Endothelial cell of umbilical vein (primary cell): ENCODE measurements at regions of chr11 and their contacts with region 1.

Region 1: DNA sequence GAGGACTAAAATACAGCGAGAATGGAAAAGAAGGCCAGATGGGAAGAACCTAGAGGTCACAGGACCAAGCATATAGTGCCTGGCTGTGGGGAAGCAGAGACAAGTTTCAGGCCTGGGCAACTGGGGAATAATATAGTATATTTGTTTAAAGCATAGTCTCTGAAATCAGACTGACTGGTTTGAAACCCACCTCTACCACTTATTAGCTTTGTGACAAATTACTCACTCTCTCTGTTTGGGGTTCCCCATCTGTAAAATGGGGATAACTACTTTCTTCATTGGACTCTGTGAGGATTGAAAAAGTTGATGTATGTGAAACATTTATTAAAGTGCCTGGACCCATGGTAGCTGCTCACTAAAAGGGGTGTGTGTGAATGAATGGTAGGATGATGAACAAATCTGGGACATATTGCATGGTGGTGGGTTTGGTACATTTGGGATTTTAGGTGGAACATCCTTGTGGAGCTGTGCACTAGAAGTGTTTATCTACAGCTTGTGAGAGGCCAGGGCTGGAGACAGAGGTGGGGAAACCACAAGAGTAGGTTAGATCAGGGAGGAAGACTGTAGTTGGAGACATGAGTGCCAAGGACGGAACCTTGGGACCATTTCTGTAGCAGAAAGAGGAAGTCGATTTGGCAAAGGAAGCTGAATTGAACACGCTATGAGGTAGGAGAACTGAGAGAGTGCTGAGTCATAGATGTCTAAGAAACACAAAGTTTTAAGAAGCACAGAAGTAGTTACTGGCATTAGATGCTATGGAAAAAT is 52.6 kb downstream of the SWAP70 start:
- DNase-seq: peak; percentile 97
- H3K4me3 ChIP-seq: no peak overlapping the region
- H3K27ac ChIP-seq: peak overlapping the region; percentile 94
- H3K4me1 ChIP-seq: peaks cover 64% of the 10 kb centered on the region
- H3K27me3 ChIP-seq: no peaks in the 10 kb centered on the region
- CTCF ChIP-seq: no peak
- POLR2A ChIP-seq: no peak

Region 2: GRCh38 chr11:9479899-9480298 is 236.6 kb before region 1 on chr11:
- CTCF ChIA-PET with region 1: no interaction called
- POLR2A ChIA-PET with region 1: no interaction called
- dilution Hi-C with region 1: no loop called
- intact Hi-C with region 1: no loop called
- DNase-seq: no peak
- H3K4me3 ChIP-seq: no peak overlapping the region
- H3K27ac ChIP-seq: no peak overlapping the region
- H3K4me1 ChIP-seq: no peaks in the 10 kb centered on the region
- H3K27me3 ChIP-seq: no peaks in the 10 kb centered on the region
- CTCF ChIP-seq: no peak
- POLR2A ChIP-seq: no peak

Region 3: GRCh38 chr11:9626496-9627394 is 89.7 kb before region 1 on chr11:
- CTCF ChIA-PET with region 1: interaction called, 4 read pairs
- POLR2A ChIA-PET with region 1: no interaction called
- dilution Hi-C with region 1: no loop called
- intact Hi-C with region 1: loop called (anchors 1 kb)
- DNase-seq: peak; percentile 96
- H3K4me3 ChIP-seq: peak overlapping the region in 1 of 3 experiments; percentile 19
- H3K27ac ChIP-seq: peak overlapping the region; percentile 96
- H3K4me1 ChIP-seq: peaks cover 33% of the 10 kb centered on the region
- H3K27me3 ChIP-seq: no peaks in the 10 kb centered on the region
- CTCF ChIP-seq: no peak
- POLR2A ChIP-seq: peak; percentile 84

Region 4: DNA sequence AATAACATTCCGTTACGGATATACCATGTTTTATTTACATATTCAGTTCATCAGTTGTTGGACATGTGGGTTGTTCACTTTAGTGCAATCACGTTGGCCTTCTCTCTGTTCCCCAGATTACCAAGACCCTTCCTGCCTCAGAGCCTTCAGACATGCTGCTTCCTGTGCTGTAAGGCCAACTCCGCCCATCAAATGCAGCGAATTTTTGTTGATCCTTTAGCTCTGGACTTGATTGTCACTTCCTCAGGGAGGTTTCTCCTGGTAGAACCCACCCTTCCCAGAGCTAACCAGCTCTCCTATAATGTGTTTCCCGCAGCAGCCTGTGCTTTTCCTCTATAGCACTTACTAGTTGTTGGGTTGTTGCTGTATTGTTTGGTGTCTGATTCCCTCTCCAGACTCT is 13.2 kb before region 1 on chr11:
- CTCF ChIA-PET with region 1: interaction called, 9 read pairs
- POLR2A ChIA-PET with region 1: interaction called, 3 read pairs
- dilution Hi-C with region 1: no loop called
- intact Hi-C with region 1: loop called (anchors 1 kb)
- DNase-seq: peak; percentile 92
- H3K4me3 ChIP-seq: peak overlapping the region in 1 of 3 experiments; percentile 20
- H3K27ac ChIP-seq: peak overlapping the region; percentile 76
- H3K4me1 ChIP-seq: peaks cover 65% of the 10 kb centered on the region
- H3K27me3 ChIP-seq: no peaks in the 10 kb centered on the region
- CTCF ChIP-seq: no peak
- POLR2A ChIP-seq: no peak